Panc1 (cell line): ENCODE measurements at regions of chr11 and their contacts with region 1.

Region 1: GRCh38 chr11:106275151-106275550 is 197.7 kb downstream of the AASDHPPT start:
- DNase-seq: no peak
- ATAC-seq: no peak
- H3K4me3 ChIP-seq: no peak overlapping the region
- H3K27ac ChIP-seq: no peak overlapping the region
- H3K4me1 ChIP-seq: no peaks in the 10 kb centered on the region
- H3K27me3 ChIP-seq: no peaks in the 10 kb centered on the region
- CTCF ChIP-seq: no peak

Region 2: DNA sequence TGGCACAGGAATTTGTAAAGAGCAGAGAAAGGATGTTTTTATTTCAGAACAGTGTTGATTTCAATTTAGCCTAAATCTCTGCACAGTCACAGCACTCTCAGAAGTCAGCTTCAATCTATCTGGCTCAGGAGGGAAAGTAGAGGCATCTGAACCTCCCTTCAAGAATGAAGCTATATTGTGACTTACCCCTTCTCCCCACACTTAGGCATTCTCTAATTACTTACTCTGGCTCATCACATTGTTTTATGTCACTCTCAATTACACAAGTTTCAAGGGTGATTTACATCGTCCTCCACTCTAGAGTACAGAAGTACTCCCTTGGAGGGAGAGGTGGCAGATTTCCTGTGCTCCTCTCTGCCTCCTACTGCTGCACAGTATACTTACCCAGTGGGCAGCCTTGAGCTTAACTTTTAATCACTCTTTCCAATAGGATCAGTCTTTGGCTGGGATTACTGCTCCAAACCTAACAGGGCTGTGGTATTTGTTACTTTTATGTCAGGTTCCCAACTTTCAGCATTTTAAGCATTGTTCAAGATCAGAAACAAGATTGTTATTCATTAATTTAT is 13.8 kb after region 1 on chr11:
- CTCF ChIA-PET with region 1: interaction called, 10 read pairs
- POLR2A ChIA-PET with region 1: no interaction called
- in situ Hi-C with region 1: no loop called
- intact Hi-C with region 1: no loop called
- DNase-seq: no peak
- ATAC-seq: no peak
- H3K4me3 ChIP-seq: no peak overlapping the region
- H3K27ac ChIP-seq: no peak overlapping the region
- H3K4me1 ChIP-seq: no peaks in the 10 kb centered on the region
- H3K27me3 ChIP-seq: no peaks in the 10 kb centered on the region
- CTCF ChIP-seq: peak; percentile 25

Region 3: GRCh38 chr11:106369224-106369623 is 94.1 kb after region 1 on chr11:
- CTCF ChIA-PET with region 1: no interaction called
- POLR2A ChIA-PET with region 1: no interaction called
- in situ Hi-C with region 1: no loop called
- intact Hi-C with region 1: no loop called
- DNase-seq: no peak
- ATAC-seq: no peak
- H3K4me3 ChIP-seq: no peak overlapping the region
- H3K27ac ChIP-seq: no peak overlapping the region
- H3K4me1 ChIP-seq: no peaks in the 10 kb centered on the region
- H3K27me3 ChIP-seq: no peaks in the 10 kb centered on the region
- CTCF ChIP-seq: peak; percentile 5; the same call in 1 of the 2 replicates